AG04450 (cell line): ENCODE measurements at regions of chr11 and their contacts with region 1.

Region 1: GRCh38 chr11:4072668-4073285 is 21.8 kb upstream of the RRM1 start:
- DNase-seq: peak; percentile 52
- H3K4me3 ChIP-seq: no peak overlapping the region
- H3K27ac ChIP-seq: no peak overlapping the region
- H3K27me3 ChIP-seq: no peaks in the 10 kb centered on the region
- CTCF ChIP-seq: peak; percentile 91

Region 2: DNA sequence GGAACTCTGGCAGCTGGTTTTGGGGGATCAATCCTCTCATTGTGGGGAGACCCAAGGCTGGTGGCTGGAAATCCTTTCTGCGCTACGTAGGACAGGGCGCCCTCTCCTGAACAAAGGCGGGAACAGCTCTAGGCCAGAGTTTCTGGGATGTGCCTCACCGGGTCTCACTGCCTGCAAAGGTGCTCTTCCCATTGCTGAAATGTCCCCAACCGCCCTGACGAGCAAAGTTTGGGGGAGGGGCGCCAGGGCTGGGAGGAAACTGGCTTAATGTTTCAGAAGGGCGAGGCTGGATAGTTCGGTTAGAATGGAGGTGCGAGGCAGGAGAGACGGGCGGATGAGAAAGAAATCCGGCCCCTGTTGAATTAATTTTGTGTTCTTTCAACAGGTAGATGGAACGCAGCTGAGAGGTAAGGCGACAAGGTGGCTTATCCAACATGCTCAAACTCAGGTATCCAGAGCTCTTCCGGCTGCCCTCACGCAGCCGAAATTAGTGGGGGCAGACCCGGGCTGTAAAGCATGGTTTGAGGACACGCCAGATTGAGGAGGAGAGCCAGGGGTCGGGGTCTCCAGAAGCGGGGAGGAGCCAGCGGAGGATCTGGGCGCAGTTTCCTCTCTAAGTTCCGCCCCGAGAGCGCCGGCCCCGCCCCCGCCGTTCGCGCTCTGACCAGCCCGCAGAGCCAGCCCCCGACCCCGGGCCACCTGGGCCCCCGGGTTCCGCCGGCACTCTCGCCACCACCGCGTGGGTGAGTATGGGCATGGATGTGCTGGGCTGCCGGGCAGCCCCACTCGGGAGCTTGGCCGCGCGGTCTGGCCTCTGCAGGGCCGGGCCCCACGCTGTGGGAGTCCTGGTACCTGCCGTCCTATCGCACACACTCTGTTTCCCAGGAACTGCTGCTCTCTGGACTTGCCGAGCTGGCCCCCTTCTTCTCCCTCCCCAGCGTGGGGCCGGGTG is 264.6 kb before region 1 on chr11 and contains the start of gene PGAP2:
- CTCF ChIA-PET with region 1: interaction called, 34 read pairs
- POLR2A ChIA-PET with region 1: no interaction called
- DNase-seq: no peak
- H3K4me3 ChIP-seq: peak within 1 kb of the TSS; percentile 81
- H3K27ac ChIP-seq: no peak within 1 kb of the TSS
- H3K27me3 ChIP-seq: no peaks in the 10 kb centered on the region
- CTCF ChIP-seq: peak; percentile 82
- polyA plus RNA-seq, gene PGAP2: 20.8 and 26.3 TPM in 2 replicates

Region 3: DNA sequence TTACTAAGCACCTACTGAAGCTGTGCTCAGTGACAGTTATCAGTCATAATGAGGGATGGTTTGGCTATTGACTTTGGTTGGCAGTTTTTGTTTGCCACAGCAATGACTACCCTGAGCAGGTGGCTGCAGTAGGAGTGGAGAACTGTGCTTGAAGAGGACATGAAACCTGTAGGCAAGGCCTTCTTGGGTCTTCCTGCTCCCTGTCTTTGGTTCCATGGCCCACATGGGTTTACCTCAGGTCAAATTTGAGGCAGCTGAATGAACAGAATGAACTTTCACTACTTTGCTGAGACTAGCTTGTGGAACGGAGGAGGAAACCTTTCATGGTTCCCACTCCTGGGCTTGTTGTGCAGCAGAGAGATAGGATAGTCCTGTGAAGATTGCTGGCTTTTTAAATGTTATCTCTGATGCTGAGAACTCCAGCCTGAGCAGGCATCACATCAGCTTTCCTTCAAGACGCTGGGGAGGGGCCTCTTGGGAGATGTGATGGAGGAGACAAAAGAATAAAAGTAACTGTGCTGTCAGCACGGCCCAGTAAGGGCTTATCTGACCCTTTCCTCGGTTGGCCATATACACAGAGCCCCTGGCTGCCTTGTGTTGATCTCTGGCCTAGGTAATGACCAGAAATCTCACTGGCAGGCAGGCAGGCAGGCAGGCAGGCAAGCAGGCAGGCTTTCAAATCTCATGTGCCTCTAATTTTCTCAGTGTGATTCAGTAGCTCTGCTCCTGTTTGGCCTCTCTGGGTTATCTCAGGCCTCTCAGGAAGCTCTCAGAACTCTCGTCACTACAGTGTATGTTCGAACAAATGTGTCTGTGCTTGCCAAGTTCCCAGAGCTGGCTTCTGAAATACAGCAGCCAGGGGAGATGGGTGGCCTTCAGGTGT is 205.3 kb before region 1 on chr11:
- CTCF ChIA-PET with region 1: interaction called, 1,559 read pairs
- POLR2A ChIA-PET with region 1: no interaction called
- DNase-seq: no peak
- H3K4me3 ChIP-seq: no peak overlapping the region
- H3K27ac ChIP-seq: no peak overlapping the region
- H3K27me3 ChIP-seq: no peaks in the 10 kb centered on the region
- CTCF ChIP-seq: no peak

Region 4: DNA sequence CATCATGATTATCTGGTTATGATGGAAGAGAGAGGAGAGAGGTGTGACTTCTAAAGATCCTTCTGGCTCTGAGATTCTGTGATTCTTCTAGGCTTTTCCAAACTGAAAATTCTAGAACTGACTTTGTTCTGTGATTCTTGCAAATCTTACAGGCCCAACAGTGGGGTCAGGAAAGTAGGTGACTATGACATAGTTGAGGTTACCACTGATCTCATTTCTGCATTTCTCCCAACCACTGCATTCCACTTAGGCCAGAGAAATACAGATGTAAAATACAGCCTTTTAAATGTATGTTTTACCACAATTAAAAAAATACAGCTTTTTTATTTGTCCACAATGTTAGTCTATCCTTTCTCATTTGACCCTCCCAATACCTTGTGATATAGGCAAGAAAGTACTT is 133.6 kb before region 1 on chr11:
- CTCF ChIA-PET with region 1: interaction called, 13 read pairs
- POLR2A ChIA-PET with region 1: no interaction called
- DNase-seq: peak; percentile 84
- H3K4me3 ChIP-seq: no peak overlapping the region
- H3K27ac ChIP-seq: no peak overlapping the region
- H3K27me3 ChIP-seq: no peaks in the 10 kb centered on the region
- CTCF ChIP-seq: no peak

Region 5: DNA sequence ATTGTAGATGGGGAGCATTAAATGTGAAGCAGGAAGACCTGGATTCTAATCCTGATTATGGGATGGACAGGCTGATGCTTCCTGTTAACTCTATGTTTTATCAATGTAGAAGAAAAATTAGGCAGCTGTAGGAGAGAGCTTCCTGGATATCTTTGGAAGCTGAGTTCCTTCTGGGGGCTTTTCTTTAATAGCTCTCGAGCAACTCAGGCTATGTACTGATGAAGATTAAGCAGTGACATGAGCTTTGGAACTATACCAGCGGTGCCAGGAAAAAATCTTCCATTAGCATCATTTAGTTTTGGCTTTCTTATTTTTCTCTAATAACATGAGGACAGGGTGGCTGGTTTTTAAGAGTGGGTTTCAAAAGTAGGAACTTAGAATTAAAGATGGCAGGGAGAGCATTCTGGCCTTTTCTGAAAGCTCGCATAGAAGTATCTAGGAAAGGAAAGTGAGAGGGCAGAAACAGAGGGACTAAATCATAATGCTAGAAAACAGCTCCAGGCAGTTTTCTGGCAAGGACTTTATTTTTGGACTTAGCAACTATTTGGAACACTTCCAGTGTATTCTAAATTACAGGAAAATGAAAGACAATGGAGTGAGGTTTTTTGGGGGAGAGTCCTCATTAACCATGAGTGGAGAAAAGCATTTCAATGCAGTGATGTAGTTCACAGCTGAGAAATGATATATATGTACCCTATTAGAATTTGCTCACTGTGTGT is 47.4 kb before region 1 on chr11:
- CTCF ChIA-PET with region 1: interaction called, 27 read pairs
- POLR2A ChIA-PET with region 1: no interaction called
- DNase-seq: no peak
- H3K4me3 ChIP-seq: no peak overlapping the region
- H3K27ac ChIP-seq: no peak overlapping the region
- H3K27me3 ChIP-seq: no peaks in the 10 kb centered on the region
- CTCF ChIP-seq: no peak

Region 6: GRCh38 chr11:4086575-4087353 is 14.0 kb after region 1 on chr11:
- CTCF ChIA-PET with region 1: interaction called, 32 read pairs
- POLR2A ChIA-PET with region 1: no interaction called
- DNase-seq: no peak
- H3K4me3 ChIP-seq: no peak overlapping the region
- H3K27ac ChIP-seq: no peak overlapping the region
- H3K27me3 ChIP-seq: no peaks in the 10 kb centered on the region
- CTCF ChIP-seq: no peak